CD14-positive monocyte (primary cell): ENCODE measurements at regions of chr10 and their contacts with region 1.

Region 1: GRCh38 chr10:115129752-115130151 is 36.6 kb downstream of the ATRNL1 start:
- DNase-seq: no peak
- H3K4me3 ChIP-seq: no peak overlapping the region
- H3K4me3 Mint-ChIP-seq: no peak overlapping the region
- H3K27ac ChIP-seq: no peak overlapping the region
- H3K27ac Mint-ChIP-seq: no peak overlapping the region
- H3K4me1 ChIP-seq: no peaks in the 10 kb centered on the region
- H3K4me1 Mint-ChIP-seq: no peaks in the 10 kb centered on the region
- H3K27me3 ChIP-seq: no peaks in the 10 kb centered on the region
- H3K27me3 Mint-ChIP-seq: peaks cover 0 to 2% (median 0%) of the 10 kb centered on the region in 3 donors
- CTCF ChIP-seq: peak; percentile 18

Region 2: DNA sequence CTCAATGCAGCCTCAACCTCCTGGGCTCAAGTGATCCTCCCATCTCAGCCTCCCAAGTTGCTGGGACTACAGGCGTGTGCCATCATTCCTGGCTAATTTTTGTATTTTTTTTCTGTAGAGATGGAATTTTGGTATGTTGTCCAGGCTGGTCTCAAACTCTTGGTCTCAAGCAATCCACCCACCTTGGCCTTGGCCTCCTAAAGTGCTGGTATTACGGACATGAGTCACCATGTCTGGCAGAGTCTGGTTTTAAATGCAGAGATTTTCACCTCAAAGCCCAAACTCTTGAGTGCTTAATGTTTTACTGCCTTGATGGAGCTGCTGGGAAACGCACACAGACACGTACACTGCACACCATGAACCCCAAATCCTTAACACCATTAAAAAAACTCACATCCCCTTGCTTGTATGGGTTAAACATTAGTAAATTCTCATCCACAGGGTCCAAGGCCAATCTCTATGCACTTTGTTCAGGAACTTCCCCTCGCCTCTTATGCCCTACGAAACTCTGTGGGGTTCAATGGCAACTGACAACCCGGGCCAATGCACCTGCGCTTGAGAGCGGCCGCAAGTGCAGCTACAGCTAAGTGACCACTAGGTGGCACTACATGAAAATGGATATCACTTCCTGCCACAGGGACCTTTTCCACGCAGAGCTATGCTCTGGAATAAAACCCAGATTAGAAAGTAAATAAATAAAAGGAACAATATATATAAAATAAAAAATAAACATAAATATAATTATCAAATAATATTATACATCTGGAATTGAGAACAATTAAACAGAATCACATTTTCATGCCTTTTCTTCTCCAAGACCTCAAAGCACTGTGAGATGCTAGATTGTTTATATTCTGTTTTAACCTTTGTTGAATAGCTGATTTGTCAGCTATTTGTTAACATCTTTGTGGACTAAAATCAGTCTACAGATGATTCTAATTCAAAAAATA is 658.5 kb before region 1 on chr10:
- intact Hi-C with region 1: loop called in 1 of 2 experiments (anchors 5 kb)
- DNase-seq: peak; percentile 35 to 60 (median 58)
- H3K4me3 ChIP-seq: no peak overlapping the region
- H3K4me3 Mint-ChIP-seq: no peak overlapping the region
- H3K27ac ChIP-seq: no peak overlapping the region
- H3K27ac Mint-ChIP-seq: no peak overlapping the region
- H3K4me1 ChIP-seq: no peaks in the 10 kb centered on the region
- H3K4me1 Mint-ChIP-seq: peaks cover 2% of the 10 kb centered on the region
- H3K27me3 ChIP-seq: no peaks in the 10 kb centered on the region
- H3K27me3 Mint-ChIP-seq: peaks cover 2 to 3% (median 2%) of the 10 kb centered on the region in 3 donors
- CTCF ChIP-seq: peak; percentile 91

Region 3: GRCh38 chr10:114956466-114956865 is 173.3 kb before region 1 on chr10:
- intact Hi-C with region 1: no loop called
- DNase-seq: no peak
- H3K4me3 ChIP-seq: no peak overlapping the region
- H3K4me3 Mint-ChIP-seq: no peak overlapping the region
- H3K27ac ChIP-seq: no peak overlapping the region
- H3K27ac Mint-ChIP-seq: no peak overlapping the region
- H3K4me1 ChIP-seq: no peaks in the 10 kb centered on the region
- H3K4me1 Mint-ChIP-seq: peaks cover 2% of the 10 kb centered on the region
- H3K27me3 ChIP-seq: no peaks in the 10 kb centered on the region
- H3K27me3 Mint-ChIP-seq: no peaks in the 10 kb centered on the region
- CTCF ChIP-seq: no peak

Region 4: GRCh38 chr10:115073796-115074195 is 56.0 kb before region 1 on chr10:
- intact Hi-C with region 1: no loop called
- DNase-seq: no peak
- H3K4me3 ChIP-seq: no peak overlapping the region
- H3K4me3 Mint-ChIP-seq: no peak overlapping the region
- H3K27ac ChIP-seq: no peak overlapping the region
- H3K27ac Mint-ChIP-seq: no peak overlapping the region
- H3K4me1 ChIP-seq: no peaks in the 10 kb centered on the region
- H3K4me1 Mint-ChIP-seq: no peaks in the 10 kb centered on the region
- H3K27me3 ChIP-seq: no peaks in the 10 kb centered on the region
- H3K27me3 Mint-ChIP-seq: peaks cover 0 to 3% (median 1%) of the 10 kb centered on the region in 3 donors
- CTCF ChIP-seq: no peak